ENCODE measurements at regions of chr10 and their contacts with region 1.

Region 1: GRCh38 chr10:32190890-32191491 is 134.8 kb upstream of the KIF5B start:
- DNase-seq: no peak
- ATAC-seq: no peak

Region 2: DNA sequence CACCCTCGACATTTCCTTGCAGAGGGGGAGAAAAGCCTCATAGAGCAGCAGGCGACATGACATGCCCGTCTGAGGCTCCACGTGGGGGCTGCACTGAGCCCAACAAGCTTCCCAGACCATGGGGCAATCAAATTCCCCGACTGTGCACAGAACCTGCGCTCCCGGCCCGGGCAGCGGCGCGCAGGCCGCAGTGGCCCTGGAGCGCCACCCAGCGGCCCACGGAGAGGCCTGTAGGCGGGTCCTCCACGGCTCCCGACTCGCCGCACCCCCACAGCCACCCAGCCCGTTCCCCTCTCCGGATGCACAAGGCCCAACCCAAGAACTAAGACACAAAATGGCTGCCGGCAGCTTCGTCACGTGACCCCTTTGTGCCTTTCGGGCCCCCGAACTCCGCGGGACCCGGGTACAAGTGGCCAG is 155.2 kb after region 1 on chr10:
- intact Hi-C with region 1: loop called in 1 of 2 experiments (anchors 10 kb)
- DNase-seq: peak; percentile 95 to 97
- ATAC-seq: peak; percentile 89

Measured in left colon (tissue), 2 donors.